ENCODE measurements at regions of chr22 and their contacts with region 1.

Region 1: DNA sequence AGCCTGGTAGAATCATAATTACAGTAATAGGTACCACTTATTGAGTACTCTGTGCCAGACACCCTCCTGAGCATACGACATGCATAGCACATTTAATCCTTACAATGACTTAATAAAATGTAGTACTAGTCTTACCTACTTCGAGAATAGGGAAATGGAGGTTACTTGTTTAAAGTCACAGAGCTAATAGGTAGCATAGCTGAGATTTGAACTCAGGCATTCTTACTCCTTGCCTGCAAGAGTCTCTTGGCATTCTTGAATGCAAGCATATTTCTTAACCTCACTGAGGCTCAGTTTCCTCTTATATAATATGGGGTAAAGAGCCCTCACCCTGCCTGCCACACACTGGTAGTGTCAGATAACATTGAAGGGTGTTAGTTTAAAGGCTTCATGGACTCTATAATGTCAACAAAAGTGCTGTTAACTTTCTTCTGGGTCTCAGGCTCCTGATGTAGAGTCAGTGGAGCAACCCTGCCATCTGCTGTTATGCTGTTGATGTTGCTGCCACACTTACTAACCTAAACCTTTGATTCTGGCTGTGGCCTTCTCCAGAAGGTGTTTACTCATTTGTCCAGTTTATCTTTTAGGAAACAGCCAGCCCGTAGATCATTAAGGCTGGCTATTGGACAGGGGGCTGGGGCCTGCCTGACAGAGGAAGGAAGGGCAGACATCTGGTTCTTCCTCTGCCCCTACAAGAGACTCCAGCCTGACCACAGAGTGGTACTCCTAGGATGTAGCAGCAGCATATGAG is 18.9 kb downstream of the LIMK2 start:
- DNase-seq: peak; percentile 92
- H3K4me3 ChIP-seq: no peak overlapping the region
- H3K27ac ChIP-seq: peak overlapping the region; percentile 83
- H3K4me1 ChIP-seq: peaks cover 69% of the 10 kb centered on the region
- H3K27me3 ChIP-seq: no peaks in the 10 kb centered on the region
- CTCF ChIP-seq: peak; percentile 79 to 85
- POLR2A ChIP-seq: peak; percentile 42

Region 2: DNA sequence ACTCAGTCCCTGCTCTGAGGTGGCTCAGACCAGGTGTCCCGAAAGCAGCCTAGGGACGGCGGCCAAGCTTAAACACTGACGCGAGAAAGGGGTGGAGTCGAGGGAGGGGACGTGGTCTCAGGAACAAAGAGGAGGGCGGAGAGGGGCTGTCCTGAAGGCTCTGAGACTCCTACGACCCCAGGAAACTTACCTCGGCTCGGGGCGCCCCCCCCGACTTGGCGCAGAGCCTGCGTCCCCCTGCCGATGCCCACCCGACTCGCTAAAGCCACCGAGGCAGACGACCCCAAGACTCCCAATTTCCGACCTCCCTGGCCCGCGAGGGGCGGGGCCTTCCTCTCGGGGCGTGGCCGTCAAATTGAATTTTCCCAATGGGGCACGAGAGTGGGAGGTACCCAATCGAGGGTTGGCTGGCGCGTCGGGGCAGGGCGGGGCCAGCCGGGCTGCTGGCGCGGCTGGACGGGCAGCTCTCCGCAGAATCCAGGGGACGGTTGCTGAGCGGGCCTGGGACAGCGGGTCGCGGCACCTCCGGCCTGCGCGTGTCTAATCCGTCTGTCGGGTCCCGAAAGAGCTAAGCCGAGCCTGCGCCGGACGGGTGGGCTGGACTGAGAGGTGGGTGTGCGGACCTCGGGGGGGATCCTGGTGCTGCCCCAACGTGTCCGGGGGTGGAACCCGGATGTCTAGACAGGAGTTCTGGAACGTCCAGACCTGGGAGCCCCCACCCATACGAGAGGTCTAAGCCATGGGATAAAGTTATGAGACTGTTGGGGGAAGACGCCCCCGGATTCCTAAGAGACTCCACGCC is 150.0 kb before region 1 on chr22 and contains the start of gene SMTN:
- CTCF ChIA-PET with region 1: interaction called, 19 read pairs
- POLR2A ChIA-PET with region 1: interaction called, 3 read pairs
- dilution Hi-C with region 1: no loop called
- intact Hi-C with region 1: no loop called
- DNase-seq: peak; percentile 96
- H3K4me3 ChIP-seq: peak within 1 kb of the TSS; percentile 47 to 85 (median 65)
- H3K27ac ChIP-seq: peak within 1 kb of the TSS; percentile 96
- H3K4me1 ChIP-seq: peaks cover 33% of the 10 kb centered on the region
- H3K27me3 ChIP-seq: no peaks in the 10 kb centered on the region
- CTCF ChIP-seq: no peak
- POLR2A ChIP-seq: peak; percentile 97
- total RNA-seq, gene SMTN: 197 and 201 TPM in 2 replicates

Region 3: GRCh38 chr22:31148953-31149627 is 82.0 kb before region 1 on chr22:
- CTCF ChIA-PET with region 1: interaction called, 10 read pairs
- POLR2A ChIA-PET with region 1: no interaction called
- dilution Hi-C with region 1: no loop called
- intact Hi-C with region 1: loop called (anchors 1 kb)
- DNase-seq: peak; percentile 84
- H3K4me3 ChIP-seq: no peak overlapping the region
- H3K27ac ChIP-seq: peak overlapping the region; percentile 62
- H3K4me1 ChIP-seq: peaks cover 8% of the 10 kb centered on the region
- H3K27me3 ChIP-seq: no peaks in the 10 kb centered on the region
- CTCF ChIP-seq: peak; percentile 97 to 99
- POLR2A ChIP-seq: no peak

Region 4: GRCh38 chr22:31206906-31207678 is 24.0 kb before region 1 on chr22:
- CTCF ChIA-PET with region 1: interaction called, 181 read pairs
- POLR2A ChIA-PET with region 1: interaction called, 5 read pairs
- dilution Hi-C with region 1: no loop called
- intact Hi-C with region 1: loop called (anchors 1 kb)
- DNase-seq: no peak
- H3K4me3 ChIP-seq: no peak overlapping the region
- H3K27ac ChIP-seq: no peak overlapping the region
- H3K4me1 ChIP-seq: peaks cover 23% of the 10 kb centered on the region
- H3K27me3 ChIP-seq: no peaks in the 10 kb centered on the region
- CTCF ChIP-seq: no peak
- POLR2A ChIP-seq: no peak

Region 5: GRCh38 chr22:31241936-31242335 is 10.9 kb after region 1 on chr22:
- CTCF ChIA-PET with region 1: interaction called, 12 read pairs
- POLR2A ChIA-PET with region 1: interaction called, 6 read pairs
- dilution Hi-C with region 1: no loop called
- intact Hi-C with region 1: loop called (anchors 1 kb)
- DNase-seq: peak; percentile 80
- H3K4me3 ChIP-seq: no peak overlapping the region
- H3K27ac ChIP-seq: peak overlapping the region; percentile 95
- H3K4me1 ChIP-seq: peaks cover 70% of the 10 kb centered on the region
- H3K27me3 ChIP-seq: no peaks in the 10 kb centered on the region
- CTCF ChIP-seq: peak; percentile 28 to 34
- POLR2A ChIP-seq: peak; percentile 48